Stomach (tissue), 19 donors: ENCODE measurements at regions of chr1 and their contacts with region 1.

Region 1: DNA sequence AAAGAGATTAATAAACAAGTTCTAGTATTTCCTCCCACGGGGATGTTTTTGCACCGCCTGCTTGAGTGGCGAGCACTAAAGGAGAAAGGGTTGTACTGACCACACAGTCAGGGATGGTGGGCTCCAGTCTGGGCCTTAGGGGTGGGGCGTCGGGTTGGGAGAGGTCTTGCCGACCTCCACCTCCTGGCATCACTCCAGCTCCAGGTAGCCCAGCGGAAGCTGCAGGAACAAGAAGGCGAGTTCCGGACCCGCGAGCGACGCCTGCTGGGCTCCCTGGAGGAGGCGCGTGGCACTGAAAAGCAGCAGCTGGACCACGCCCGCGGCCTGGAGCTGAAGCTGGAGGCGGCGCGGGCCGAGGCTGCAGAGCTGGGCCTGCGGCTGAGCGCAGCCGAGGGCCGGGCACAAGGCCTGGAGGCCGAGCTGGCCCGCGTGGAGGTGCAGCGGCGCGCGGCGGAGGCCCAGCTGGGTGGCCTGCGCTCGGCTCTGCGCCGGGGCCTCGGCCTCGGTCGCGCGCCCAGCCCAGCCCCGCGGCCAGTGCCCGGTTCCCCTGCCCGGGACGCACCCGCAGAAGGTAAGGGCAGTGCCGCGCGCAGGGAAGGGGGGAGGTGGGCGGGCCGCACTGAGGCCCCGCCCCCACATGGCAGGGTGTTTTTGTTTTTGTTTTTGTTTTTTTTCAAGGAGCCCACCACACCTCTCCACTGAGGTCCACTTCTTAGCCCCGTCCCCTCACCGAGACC is 19.7 kb downstream of the MFAP2 start:
- DNase-seq: peak; percentile 92 to 94
- H3K4me3 ChIP-seq: peak overlapping the region; percentile 44 to 49 (median 46)
- H3K27ac ChIP-seq: peak overlapping the region; percentile 11 to 84 (median 62)
- H3K4me1 ChIP-seq: peaks cover 0 to 23% (median 19%) of the 10 kb centered on the region in 4 donors
- H3K27me3 ChIP-seq: no peaks in the 10 kb centered on the region
- CTCF ChIP-seq: peak in 5 of 7 experiments; percentile 61 to 75 (median 73)
- EP300 ChIP-seq: no peak
- POLR2A ChIP-seq: no peak

Region 2: DNA sequence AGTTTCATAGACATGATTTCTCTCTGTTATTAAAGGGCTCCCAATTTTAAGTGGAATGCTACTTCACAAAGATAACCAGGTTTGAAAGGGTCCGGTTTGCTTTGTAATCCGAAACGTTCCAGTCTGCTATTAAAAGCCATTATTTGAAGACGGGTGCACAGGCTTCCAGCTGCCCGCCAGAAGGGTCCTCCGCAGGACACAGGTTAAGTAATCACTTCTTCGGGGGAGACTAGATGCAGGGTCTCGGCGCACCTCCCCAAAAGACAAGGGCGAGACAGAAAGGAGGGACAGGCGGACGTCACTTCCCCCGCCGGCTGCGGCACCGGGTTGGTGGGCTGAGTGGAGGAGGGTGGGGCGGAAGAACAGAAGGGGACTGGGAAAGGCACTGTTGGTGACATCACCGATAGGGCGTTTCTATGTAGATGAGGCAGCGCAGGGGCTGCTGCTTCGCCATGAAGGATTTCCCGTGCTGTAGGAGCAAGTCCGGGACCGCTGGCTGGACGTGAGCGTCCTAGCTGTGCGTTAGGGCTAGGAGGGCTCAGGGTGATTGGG is 56.1 kb before region 1 on chr1:
- intact Hi-C with region 1: no loop called
- DNase-seq: peak; percentile 99 to 100
- H3K4me3 ChIP-seq: peak overlapping the region; percentile 38 to 47 (median 46)
- H3K27ac ChIP-seq: peak overlapping the region; percentile 88 to 98 (median 92)
- H3K4me1 ChIP-seq: peaks cover 0 to 19% (median 18%) of the 10 kb centered on the region in 4 donors
- H3K27me3 ChIP-seq: no peaks in the 10 kb centered on the region
- CTCF ChIP-seq: peak in 1 of 7 experiments; percentile 19
- EP300 ChIP-seq: peak; percentile 28
- POLR2A ChIP-seq: no peak

Region 3: DNA sequence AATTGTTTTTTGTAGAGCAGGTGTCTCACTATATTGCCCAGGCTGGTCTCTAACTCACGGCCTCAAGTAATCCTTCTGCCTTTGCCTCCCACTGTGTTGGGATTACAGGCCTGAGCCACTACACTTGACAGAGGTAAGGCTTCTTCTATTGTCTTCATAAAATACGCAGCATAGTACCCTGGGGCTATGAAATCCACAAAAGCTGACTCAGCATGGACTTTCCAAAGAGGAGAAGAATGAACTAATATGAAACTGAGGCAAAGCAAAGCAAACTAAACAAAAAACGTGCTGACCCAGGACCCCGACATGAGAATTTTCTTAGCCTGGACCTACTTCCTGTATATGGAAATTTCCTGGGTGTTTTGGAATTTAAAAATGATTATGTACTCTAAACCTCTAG is 69.5 kb after region 1 on chr1:
- intact Hi-C with region 1: loop called (anchors 10 kb)
- DNase-seq: no peak
- H3K4me3 ChIP-seq: no peak overlapping the region
- H3K27ac ChIP-seq: no peak overlapping the region
- H3K4me1 ChIP-seq: peaks cover 5 to 17% (median 9%) of the 10 kb centered on the region in 4 donors
- H3K27me3 ChIP-seq: no peaks in the 10 kb centered on the region
- CTCF ChIP-seq: no peak
- EP300 ChIP-seq: no peak
- POLR2A ChIP-seq: no peak

Region 4: DNA sequence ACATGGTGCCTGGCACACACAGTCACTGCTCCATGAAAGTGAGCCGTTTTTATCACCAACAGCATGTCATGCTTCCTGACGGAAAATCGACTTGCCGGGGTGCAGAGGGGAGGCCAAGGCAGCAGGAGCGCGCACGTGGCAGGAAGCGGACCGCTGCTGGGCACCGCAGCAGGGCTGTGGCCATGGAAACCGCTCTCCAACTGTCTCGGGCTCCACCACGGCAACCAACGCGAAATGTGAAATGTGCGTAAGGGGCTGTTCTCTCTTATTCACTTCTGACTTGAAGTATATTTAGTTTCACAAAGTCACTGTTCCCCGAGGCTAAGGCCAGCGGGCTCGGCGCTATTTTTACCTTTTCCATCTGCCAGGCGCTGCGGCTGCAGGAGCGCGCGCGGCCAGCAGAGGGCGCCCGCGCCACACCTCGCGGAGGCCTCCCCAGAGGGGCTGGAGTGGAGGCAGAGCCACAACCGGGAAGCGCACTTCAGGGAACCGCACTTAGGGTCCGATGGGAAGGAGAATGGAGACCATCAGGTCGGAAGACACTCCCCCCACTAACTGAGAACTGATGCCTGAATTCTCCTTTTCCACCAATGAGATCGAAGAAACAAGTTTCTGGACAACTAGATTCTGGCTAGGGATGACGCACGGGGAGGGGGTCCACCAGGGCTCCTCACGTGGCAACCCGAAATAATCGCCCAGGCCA is 459.0 kb after region 1 on chr1:
- intact Hi-C with region 1: no loop called
- DNase-seq: peak; percentile 79 to 84
- H3K4me3 ChIP-seq: no peak overlapping the region
- H3K27ac ChIP-seq: peak overlapping the region in 1 of 5 donors; percentile 1
- H3K4me1 ChIP-seq: peaks cover 0 to 26% (median 10%) of the 10 kb centered on the region in 4 donors
- H3K27me3 ChIP-seq: no peaks in the 10 kb centered on the region
- CTCF ChIP-seq: peak in 6 of 7 experiments; percentile 65 to 99 (median 98)
- EP300 ChIP-seq: no peak
- POLR2A ChIP-seq: no peak